ENCODE measurements at regions of chrX and their contacts with region 1.

Region 1: GRCh38 chrX:45186643-45187026 is 14.0 kb downstream of the DIPK2B start:
- DNase-seq: no peak
- ATAC-seq: peak; percentile 51
- H3K4me3 ChIP-seq: no peak overlapping the region
- H3K27ac ChIP-seq: no peak overlapping the region
- H3K4me1 ChIP-seq: no peaks in the 10 kb centered on the region
- H3K27me3 ChIP-seq: no peaks in the 10 kb centered on the region; a peak in 1 of 4 replicates
- CTCF ChIP-seq: no peak
- EP300 ChIP-seq: no peak
- POLR2A ChIP-seq: no peak
- RAD21 ChIP-seq: no peak

Region 2: DNA sequence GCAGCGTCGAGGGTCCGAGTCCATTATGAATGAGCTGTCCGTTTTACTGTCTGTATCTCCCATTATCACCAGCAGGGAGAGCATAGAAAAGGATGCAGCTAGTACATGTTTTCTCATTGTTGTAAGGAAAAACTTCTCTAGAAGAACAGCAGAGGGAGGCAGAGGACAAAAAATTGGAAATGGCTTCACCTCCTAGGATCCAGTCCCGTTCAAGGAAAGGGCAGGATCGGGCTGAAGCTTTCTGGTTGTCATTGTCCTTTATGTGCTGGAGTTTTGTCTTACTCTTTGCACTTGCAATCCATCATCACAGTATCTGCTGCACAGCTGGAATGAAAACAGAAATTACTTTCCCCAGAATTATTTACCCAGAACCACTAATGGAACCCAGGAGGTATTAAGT is 1228.1 kb before region 1 on chrX:
- CTCF ChIA-PET with region 1: interaction called, 15 read pairs
- POLR2A ChIA-PET with region 1: no interaction called
- RAD21 ChIA-PET with region 1: interaction called, 7 read pairs
- SMC1A ChIA-PET with region 1: interaction called, 8 read pairs
- in situ Hi-C with region 1: no loop called
- intact Hi-C with region 1: loop called (anchors 2 kb)
- DNase-seq: peak; percentile 13
- ATAC-seq: peak; percentile 87
- H3K4me3 ChIP-seq: no peak overlapping the region
- H3K27ac ChIP-seq: no peak overlapping the region
- H3K4me1 ChIP-seq: no peaks in the 10 kb centered on the region
- H3K27me3 ChIP-seq: no peaks in the 10 kb centered on the region
- CTCF ChIP-seq: peak; percentile 62 to 83 (median 68)
- EP300 ChIP-seq: no peak
- POLR2A ChIP-seq: no peak
- RAD21 ChIP-seq: peak; percentile 77

Region 3: DNA sequence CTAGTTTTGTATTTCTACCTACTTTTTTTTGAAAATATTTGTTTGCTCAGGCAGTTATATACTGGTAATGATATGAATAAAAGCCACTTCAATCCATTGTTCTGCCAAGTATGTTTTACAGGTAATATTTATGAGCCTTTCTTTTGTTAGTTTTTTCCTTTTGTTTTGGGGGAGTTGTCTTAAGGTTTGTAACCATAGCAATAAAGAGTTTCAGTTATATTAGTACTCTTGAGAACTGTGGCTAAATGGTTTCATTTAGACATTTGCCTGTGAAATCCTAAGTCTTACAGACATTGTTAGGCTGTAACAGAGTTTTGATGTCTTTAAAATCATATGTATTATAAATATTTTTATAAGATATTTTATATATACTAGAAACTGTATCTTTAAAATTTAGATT is 136.1 kb before region 1 on chrX:
- CTCF ChIA-PET with region 1: no interaction called
- POLR2A ChIA-PET with region 1: no interaction called
- RAD21 ChIA-PET with region 1: no interaction called
- SMC1A ChIA-PET with region 1: no interaction called
- in situ Hi-C with region 1: no loop called
- intact Hi-C with region 1: no loop called
- DNase-seq: no peak
- ATAC-seq: peak; percentile 79
- H3K4me3 ChIP-seq: no peak overlapping the region
- H3K27ac ChIP-seq: no peak overlapping the region
- H3K4me1 ChIP-seq: no peaks in the 10 kb centered on the region
- H3K27me3 ChIP-seq: no peaks in the 10 kb centered on the region
- CTCF ChIP-seq: no peak
- EP300 ChIP-seq: no peak
- POLR2A ChIP-seq: no peak
- RAD21 ChIP-seq: no peak

Region 4: GRCh38 chrX:45077748-45078424 is 108.7 kb before region 1 on chrX:
- CTCF ChIA-PET with region 1: no interaction called
- POLR2A ChIA-PET with region 1: no interaction called
- RAD21 ChIA-PET with region 1: no interaction called
- SMC1A ChIA-PET with region 1: no interaction called
- in situ Hi-C with region 1: no loop called
- intact Hi-C with region 1: loop called (anchors 2 kb)
- DNase-seq: peak; percentile 62
- ATAC-seq: peak; percentile 96
- H3K4me3 ChIP-seq: no peak overlapping the region
- H3K27ac ChIP-seq: peak overlapping the region; percentile 42; the same call in 1 of the 2 replicates
- H3K4me1 ChIP-seq: peaks cover 6% of the 10 kb centered on the region; the same call in 1 of the 2 replicates
- H3K27me3 ChIP-seq: no peaks in the 10 kb centered on the region
- CTCF ChIP-seq: no peak
- EP300 ChIP-seq: no peak
- POLR2A ChIP-seq: no peak
- RAD21 ChIP-seq: no peak

Region 5: DNA sequence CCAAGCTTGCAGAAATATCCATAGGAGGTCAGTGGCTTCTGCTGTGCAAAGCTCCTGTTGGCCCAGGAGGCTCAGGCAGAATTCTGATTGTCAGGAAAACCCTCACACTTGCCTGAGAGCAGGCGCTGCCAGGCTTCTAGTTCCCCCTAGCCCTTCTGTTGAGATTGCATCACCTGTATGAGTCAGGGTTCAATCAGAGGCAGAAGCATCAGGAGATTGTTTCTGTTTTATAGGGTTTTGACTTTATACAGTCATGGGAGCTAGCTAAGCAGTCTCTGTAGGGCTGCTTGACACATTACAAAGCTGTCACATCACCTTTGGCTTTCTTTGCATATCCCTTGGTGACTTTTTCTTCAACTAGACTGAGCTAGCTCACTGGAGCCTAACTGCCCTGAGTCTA is 13.7 kb before region 1 on chrX:
- CTCF ChIA-PET with region 1: interaction called, 12 read pairs
- POLR2A ChIA-PET with region 1: no interaction called
- RAD21 ChIA-PET with region 1: no interaction called
- SMC1A ChIA-PET with region 1: no interaction called
- in situ Hi-C with region 1: no loop called
- intact Hi-C with region 1: no loop called
- DNase-seq: no peak
- ATAC-seq: no peak
- H3K4me3 ChIP-seq: no peak overlapping the region
- H3K27ac ChIP-seq: no peak overlapping the region
- H3K4me1 ChIP-seq: no peaks in the 10 kb centered on the region
- H3K27me3 ChIP-seq: no peaks in the 10 kb centered on the region; a peak in 1 of 4 replicates
- CTCF ChIP-seq: no peak
- EP300 ChIP-seq: no peak
- POLR2A ChIP-seq: no peak
- RAD21 ChIP-seq: no peak

Region 6: DNA sequence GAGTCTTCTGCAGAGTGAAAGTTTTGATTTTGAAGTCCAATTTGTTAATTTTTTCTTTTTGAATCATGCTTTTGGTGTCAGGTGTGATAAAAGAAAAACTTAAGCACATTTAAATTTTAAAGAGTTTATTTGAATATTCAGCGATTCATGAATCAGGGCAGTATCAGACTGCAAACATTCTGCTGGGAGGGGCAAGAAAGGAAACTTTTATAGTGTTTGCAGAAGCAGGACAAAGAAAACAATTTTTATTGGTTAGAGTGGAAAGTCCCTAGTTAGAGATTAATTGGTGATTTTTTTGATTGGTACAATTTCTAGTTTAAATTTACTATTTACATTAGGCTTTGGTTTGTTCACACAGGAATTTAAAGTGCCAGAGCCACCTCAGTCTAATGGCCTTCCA is 15.5 kb after region 1 on chrX:
- CTCF ChIA-PET with region 1: interaction called, 11 read pairs
- POLR2A ChIA-PET with region 1: no interaction called
- RAD21 ChIA-PET with region 1: no interaction called
- SMC1A ChIA-PET with region 1: interaction called, 8 read pairs
- in situ Hi-C with region 1: no loop called
- intact Hi-C with region 1: no loop called
- DNase-seq: no peak
- ATAC-seq: no peak
- H3K4me3 ChIP-seq: no peak overlapping the region
- H3K27ac ChIP-seq: no peak overlapping the region
- H3K4me1 ChIP-seq: no peaks in the 10 kb centered on the region
- H3K27me3 ChIP-seq: no peaks in the 10 kb centered on the region; a peak in 1 of 4 replicates
- CTCF ChIP-seq: no peak
- EP300 ChIP-seq: no peak
- POLR2A ChIP-seq: no peak
- RAD21 ChIP-seq: no peak

Region 7: DNA sequence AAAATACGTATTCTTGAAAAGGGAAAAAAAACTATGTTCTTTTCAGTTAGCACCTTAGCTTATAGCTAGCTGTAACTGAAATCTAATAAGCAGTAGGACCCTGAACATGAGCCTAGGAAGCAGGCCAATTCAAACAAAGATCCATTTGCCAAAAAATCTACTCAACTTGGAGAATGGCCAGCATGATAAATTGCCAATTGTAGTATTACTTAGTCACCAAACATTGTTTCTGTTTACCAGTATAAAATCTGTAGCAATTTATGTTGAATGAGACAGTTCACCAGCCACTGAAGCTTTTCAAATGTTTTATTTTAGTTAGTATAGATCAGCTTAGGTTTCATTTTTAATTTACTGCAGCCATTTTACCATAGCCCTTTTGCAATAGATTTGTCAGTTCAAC is 337.7 kb after region 1 on chrX:
- CTCF ChIA-PET with region 1: no interaction called
- POLR2A ChIA-PET with region 1: no interaction called
- RAD21 ChIA-PET with region 1: no interaction called
- SMC1A ChIA-PET with region 1: no interaction called
- in situ Hi-C with region 1: no loop called
- intact Hi-C with region 1: no loop called
- DNase-seq: no peak
- ATAC-seq: no peak
- H3K4me3 ChIP-seq: no peak overlapping the region
- H3K27ac ChIP-seq: no peak overlapping the region
- H3K4me1 ChIP-seq: no peaks in the 10 kb centered on the region
- H3K27me3 ChIP-seq: no peaks in the 10 kb centered on the region
- CTCF ChIP-seq: no peak
- EP300 ChIP-seq: no peak
- POLR2A ChIP-seq: no peak
- RAD21 ChIP-seq: no peak